ENCODE measurements at regions of chr17 and their contacts with region 1.

Region 1: DNA sequence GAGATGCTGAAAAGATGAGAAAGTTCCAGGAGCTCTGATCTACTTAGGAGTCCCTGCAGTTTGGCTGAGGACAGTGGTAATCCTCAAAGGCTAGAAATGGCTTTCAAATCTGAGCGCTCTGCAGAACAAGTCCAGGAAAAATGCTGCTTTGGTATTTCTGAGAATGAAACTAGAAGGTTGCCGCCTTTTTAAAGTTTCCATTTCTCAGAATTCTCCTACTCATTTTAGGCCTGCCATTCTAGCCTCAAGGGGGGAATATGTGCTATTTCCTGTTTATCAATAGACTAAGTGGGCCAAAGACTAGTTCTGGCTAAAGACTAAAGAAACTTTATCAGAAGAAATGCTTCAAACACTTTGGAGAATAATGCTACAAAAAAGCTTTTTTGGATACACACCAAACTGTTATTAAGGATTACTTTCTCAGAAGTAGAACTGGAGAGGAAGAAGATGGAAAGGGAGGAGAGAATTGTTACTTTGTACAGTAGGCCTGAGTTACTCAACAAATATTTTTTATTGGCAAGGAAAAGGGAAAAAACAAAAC is at the start of gene SLFN12L:
- DNase-seq: no peak
- ATAC-seq: no peak
- H3K4me3 Mint-ChIP-seq: no peak within 1 kb of the TSS
- H3K27ac Mint-ChIP-seq: no peak within 1 kb of the TSS
- H3K4me1 Mint-ChIP-seq: no peaks in the 10 kb centered on the region
- H3K27me3 Mint-ChIP-seq: peaks cover 6% of the 10 kb centered on the region; the same call in 1 of the 2 replicates
- CTCF ChIP-seq: no peak
- total RNA-seq, gene SLFN12L: 0.07 to 0.16 TPM (median 0.13 TPM) in 3 replicates

Region 2: DNA sequence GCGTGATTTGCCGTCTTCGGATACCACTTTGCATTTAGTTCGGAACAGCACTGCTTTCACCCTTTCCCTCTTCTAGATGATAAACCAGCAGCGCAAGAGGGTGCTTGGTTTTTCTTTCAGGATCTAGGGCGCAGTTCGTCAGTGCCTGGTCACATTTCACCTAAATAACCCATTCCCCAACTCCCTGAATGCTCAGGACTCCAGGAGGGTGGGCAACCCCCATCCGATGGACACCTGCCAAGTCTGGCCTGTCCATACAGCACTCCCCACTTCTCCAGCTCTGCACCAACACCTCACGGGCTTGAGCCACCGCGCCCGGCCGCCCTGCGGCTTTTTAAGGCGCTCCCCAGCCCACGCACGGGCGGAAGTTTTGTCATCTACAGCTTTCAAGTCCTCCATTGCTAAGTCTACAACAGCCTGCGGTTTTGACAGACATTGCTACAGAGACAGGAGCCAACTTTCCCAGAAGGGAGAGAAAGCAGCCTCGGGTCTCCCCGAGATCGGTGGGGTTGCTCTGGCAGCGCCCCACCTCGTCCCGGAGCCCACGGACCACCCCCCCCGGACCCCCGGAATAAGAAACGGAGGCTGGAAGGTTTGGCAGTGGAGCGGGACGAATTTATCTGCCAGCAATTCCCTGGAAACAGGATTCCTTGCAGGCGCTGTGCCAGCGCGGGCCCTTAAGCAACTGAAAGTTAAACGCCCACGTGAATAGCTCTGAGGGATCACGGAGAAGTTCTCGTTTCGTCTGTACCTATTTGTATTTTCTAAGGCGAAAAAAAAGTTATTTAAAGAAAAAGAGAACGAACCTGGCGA is 50.5 kb before region 1 on chr17:
- CTCF ChIA-PET with region 1: interaction called, 11 read pairs
- POLR2A ChIA-PET with region 1: no interaction called
- DNase-seq: no peak
- ATAC-seq: no peak
- H3K4me3 Mint-ChIP-seq: peak overlapping the region; percentile 64
- H3K27ac Mint-ChIP-seq: no peak overlapping the region
- H3K4me1 Mint-ChIP-seq: peaks cover 39% of the 10 kb centered on the region
- H3K27me3 Mint-ChIP-seq: peaks cover 100% of the 10 kb centered on the region
- CTCF ChIP-seq: no peak

Region 3: DNA sequence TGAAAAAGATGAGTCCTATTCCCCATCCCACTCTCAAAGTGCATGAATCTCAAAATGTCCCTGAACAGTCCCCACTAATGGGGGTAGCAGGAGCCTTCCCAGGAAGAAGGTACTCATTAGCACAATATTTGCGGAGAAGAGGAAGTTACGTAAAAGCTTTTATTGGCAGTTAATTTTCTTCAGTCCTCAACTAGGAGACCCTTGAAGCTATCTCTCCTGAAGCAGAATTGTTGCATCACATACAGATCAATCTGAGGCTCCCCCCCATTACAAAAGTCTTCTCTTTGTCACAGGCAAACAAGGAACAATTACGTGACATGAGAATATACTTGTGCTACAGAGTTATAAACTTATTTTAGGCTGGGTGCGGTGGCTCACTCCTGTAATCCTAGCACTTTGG is 14.4 kb before region 1 on chr17:
- CTCF ChIA-PET with region 1: interaction called, 10 read pairs
- POLR2A ChIA-PET with region 1: no interaction called
- DNase-seq: no peak
- ATAC-seq: no peak
- H3K4me3 Mint-ChIP-seq: no peak overlapping the region
- H3K27ac Mint-ChIP-seq: no peak overlapping the region
- H3K4me1 Mint-ChIP-seq: peaks cover 4% of the 10 kb centered on the region
- H3K27me3 Mint-ChIP-seq: peaks cover 66% of the 10 kb centered on the region
- CTCF ChIP-seq: no peak

Region 4: GRCh38 chr17:35555695-35556094 is 18.0 kb after region 1 on chr17:
- CTCF ChIA-PET with region 1: interaction called, 31 read pairs
- POLR2A ChIA-PET with region 1: no interaction called
- DNase-seq: no peak
- ATAC-seq: no peak
- H3K4me3 Mint-ChIP-seq: no peak overlapping the region
- H3K27ac Mint-ChIP-seq: no peak overlapping the region
- H3K4me1 Mint-ChIP-seq: peaks cover 11% of the 10 kb centered on the region
- H3K27me3 Mint-ChIP-seq: peaks cover 19% of the 10 kb centered on the region
- CTCF ChIP-seq: no peak

Measured in WTC11 (cell line).